OCI-LY7 (cell line): ENCODE measurements at regions of chr3 and their contacts with region 1.

Region 1: GRCh38 chr3:23435318-23435717 is 232.2 kb downstream of the UBE2E2 start:
- DNase-seq: peak; percentile 57
- H3K4me3 ChIP-seq: no peak overlapping the region
- H3K27ac ChIP-seq: peak overlapping the region; percentile 6
- H3K4me1 ChIP-seq: peaks cover 79% of the 10 kb centered on the region
- CTCF ChIP-seq: 0 out of 2 replicates have a peak, but pooled peaks have one; percentile 22

Region 2: GRCh38 chr3:23421811-23422516 is 13.4 kb before region 1 on chr3:
- CTCF ChIA-PET with region 1: no interaction called
- POLR2A ChIA-PET with region 1: interaction called, 13 read pairs
- intact Hi-C with region 1: no loop called
- DNase-seq: no peak
- H3K4me3 ChIP-seq: no peak overlapping the region
- H3K27ac ChIP-seq: no peak overlapping the region
- H3K4me1 ChIP-seq: peaks cover 18% of the 10 kb centered on the region
- CTCF ChIP-seq: no peak

Region 3: DNA sequence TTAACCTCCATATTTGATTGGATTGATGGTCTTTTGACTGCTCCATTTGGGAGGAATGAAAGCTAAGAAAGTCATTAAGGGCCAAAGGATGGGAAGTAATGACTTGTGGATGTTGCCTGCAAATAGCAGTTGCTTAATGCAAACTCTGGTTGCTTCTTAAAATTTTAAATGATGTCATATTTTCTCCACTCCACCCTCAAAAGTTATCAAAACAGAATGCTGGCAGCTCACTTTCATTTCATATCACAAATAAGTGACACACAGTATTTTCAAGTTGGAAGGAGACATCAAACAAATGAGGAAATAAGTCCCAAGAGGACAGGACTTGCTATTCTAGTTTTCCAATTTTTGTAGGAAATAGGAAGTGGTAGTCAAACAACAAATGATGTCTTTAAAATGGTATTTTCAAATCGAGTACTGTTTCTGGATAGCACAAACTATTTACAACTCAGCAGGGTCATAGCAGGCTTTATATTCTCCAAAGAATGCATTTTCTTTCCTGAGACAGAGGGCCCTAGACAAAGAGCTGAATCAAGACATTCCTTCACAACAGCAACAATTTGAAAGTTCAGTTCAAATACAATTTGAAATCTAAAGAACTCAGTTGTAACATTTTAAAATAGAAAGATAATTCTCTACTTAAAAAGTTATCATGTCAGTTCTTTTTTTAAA is 205.3 kb after region 1 on chr3:
- CTCF ChIA-PET with region 1: no interaction called
- POLR2A ChIA-PET with region 1: no interaction called
- intact Hi-C with region 1: no loop called
- DNase-seq: no peak
- H3K4me3 ChIP-seq: no peak overlapping the region
- H3K27ac ChIP-seq: no peak overlapping the region
- H3K4me1 ChIP-seq: peaks cover 13% of the 10 kb centered on the region
- CTCF ChIP-seq: no peak